A673 (cell line): ENCODE measurements at regions of chr2 and their contacts with region 1.

Region 1: DNA sequence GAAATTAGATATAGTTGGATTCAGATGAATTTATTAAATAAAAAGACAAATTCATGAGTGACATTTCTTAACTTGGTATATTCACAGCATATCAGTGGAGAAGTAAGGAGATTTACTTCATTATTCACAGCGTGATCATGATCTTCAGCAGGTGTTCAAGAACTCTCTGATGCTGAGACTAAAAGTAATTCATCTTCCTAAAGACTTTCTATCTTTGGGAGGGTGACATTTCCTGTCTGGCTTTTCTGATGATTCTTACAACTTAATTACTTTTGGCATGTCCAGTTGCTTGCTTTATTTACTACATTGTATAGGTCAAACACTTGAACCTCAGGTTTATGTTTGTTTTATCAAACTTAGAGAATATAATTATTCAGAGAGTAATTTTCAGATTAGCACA is 224.6 kb downstream of the PLCL1 start:
- DNase-seq: no peak
- H3K4me3 ChIP-seq: no peak overlapping the region
- H3K27ac ChIP-seq: no peak overlapping the region
- H3K4me1 ChIP-seq: no peaks in the 10 kb centered on the region
- H3K27me3 ChIP-seq: peaks cover 3% of the 10 kb centered on the region
- CTCF ChIP-seq: no peak

Region 2: GRCh38 chr2:196902828-196903227 is 1126.1 kb before region 1 on chr2:
- CTCF ChIA-PET with region 1: no interaction called
- POLR2A ChIA-PET with region 1: interaction called, 19 read pairs
- intact Hi-C with region 1: no loop called
- DNase-seq: no peak
- H3K4me3 ChIP-seq: no peak overlapping the region
- H3K27ac ChIP-seq: no peak overlapping the region
- H3K4me1 ChIP-seq: no peaks in the 10 kb centered on the region
- H3K27me3 ChIP-seq: no peaks in the 10 kb centered on the region
- CTCF ChIP-seq: no peak